ENCODE measurements at regions of chr5 and their contacts with region 1.

Region 1: DNA sequence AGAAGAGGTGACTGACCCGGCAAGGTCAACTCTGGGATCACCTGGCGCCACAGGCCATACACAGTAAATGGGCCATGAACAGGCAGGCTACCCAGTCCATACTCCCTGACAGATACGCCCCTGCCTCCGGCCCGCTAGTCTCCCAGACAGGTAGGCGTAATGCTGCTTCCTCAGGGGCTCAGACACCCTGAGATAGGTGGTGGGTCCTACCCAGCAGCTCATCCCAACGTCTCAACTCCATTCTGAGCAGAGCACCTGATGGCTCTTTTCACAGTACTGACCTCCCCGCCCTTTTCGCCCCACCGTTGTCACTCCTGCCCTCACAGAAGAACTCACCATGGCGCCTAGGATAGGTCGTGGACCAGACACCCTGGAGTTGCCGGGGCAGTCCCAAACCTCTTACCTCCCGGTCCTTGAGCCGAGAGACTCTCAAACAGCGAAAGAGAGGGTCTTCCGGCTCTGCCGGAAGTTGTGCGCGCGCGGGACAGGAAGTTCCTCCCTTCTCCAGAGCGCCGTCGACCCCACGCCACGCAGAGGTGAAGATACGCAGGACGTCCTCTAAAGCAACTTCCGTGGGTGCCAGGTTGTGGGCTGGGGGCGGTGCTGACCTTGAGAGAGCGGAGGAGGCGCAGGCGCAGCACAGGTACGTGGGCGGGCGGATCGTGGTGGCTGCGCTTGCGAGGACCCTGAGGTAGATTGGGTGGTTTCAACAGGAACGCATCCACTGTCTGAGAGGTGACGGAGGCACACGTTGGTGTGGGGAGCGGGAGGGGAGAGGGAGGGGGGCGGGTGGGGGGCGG is at the start of gene TMEM161B:
- DNase-seq: peak; percentile 91 to 99 (median 95)
- ATAC-seq: peak; percentile 96
- H3K4me3 ChIP-seq: peak within 1 kb of the TSS; percentile 76 to 94
- H3K4me3 Mint-ChIP-seq: peak within 1 kb of the TSS; percentile 99
- H3K27ac ChIP-seq: peak within 1 kb of the TSS; percentile 89 to 96
- H3K27ac Mint-ChIP-seq: peak within 1 kb of the TSS; percentile 100
- H3K4me1 ChIP-seq: peaks cover 25% of the 10 kb centered on the region
- H3K4me1 Mint-ChIP-seq: peaks cover 74% of the 10 kb centered on the region
- H3K27me3 ChIP-seq: no peaks in the 10 kb centered on the region
- H3K27me3 Mint-ChIP-seq: no peaks in the 10 kb centered on the region
- CTCF ChIP-seq: no peak
- total RNA-seq, gene TMEM161B: 18.9 to 20.8 TPM

Region 2: DNA sequence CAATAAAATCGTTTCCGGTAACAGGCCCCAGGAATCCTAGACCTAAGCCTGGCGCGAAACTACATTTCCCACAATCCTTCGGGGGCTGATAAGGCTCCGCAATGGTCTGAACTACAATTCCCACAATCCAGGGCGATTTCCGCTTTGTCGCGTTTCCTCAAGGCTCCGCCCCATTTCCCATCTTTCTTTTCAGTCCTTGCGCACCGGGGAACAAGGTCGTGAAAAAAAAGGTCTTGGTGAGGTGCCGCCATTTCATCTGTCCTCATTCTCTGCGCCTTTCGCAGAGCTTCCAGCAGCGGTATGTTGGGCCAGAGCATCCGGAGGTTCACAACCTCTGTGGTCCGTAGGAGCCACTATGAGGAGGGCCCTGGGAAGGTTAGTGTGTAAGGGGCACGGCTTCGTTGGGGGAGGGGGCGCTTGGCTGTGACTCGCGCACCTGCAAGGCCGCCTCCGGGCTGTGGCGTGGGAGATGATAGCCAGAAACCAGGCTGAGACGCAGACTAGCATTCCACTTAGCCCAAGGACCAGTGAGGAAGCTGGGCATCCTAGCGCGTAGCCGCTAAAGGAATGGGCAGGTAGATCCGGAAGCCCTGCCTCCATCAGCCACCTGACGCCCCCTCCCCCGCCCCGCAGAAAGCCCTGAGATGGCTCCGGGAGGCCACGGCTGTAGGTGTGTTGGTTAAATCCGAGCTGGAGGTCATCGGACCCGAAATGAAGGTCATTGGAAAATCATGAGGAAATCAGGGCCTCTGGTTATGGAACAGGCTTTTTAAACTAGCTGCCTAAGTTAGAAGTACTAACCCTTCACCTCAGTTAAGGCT is 1650.6 kb before region 1 on chr5 and contains the start of gene COX7C:
- CTCF ChIA-PET with region 1: no interaction called
- POLR2A ChIA-PET with region 1: no interaction called
- intact Hi-C with region 1: loop called (anchors 1 to 5 kb)
- DNase-seq: peak; percentile 84 to 98 (median 91)
- ATAC-seq: peak; percentile 92
- H3K4me3 ChIP-seq: peak within 1 kb of the TSS; percentile 69 to 97
- H3K4me3 Mint-ChIP-seq: peak within 1 kb of the TSS; percentile 100
- H3K27ac ChIP-seq: peak within 1 kb of the TSS; percentile 89 to 96
- H3K27ac Mint-ChIP-seq: peak within 1 kb of the TSS; percentile 100
- H3K4me1 ChIP-seq: peaks cover 15% of the 10 kb centered on the region
- H3K4me1 Mint-ChIP-seq: peaks cover 28% of the 10 kb centered on the region
- H3K27me3 ChIP-seq: no peaks in the 10 kb centered on the region
- H3K27me3 Mint-ChIP-seq: peaks cover 10% of the 10 kb centered on the region
- CTCF ChIP-seq: no peak
- total RNA-seq, gene COX7C: 432 to 495 TPM

Region 3: GRCh38 chr5:88140856-88141752 is 127.5 kb before region 1 on chr5:
- CTCF ChIA-PET with region 1: no interaction called
- POLR2A ChIA-PET with region 1: no interaction called
- intact Hi-C with region 1: loop called (anchors 5 kb)
- DNase-seq: peak; percentile 62 to 93 (median 80)
- ATAC-seq: peak; percentile 90
- H3K4me3 ChIP-seq: peak overlapping the region; percentile 42 to 53
- H3K4me3 Mint-ChIP-seq: no peak overlapping the region
- H3K27ac ChIP-seq: no peak overlapping the region
- H3K27ac Mint-ChIP-seq: no peak overlapping the region
- H3K4me1 ChIP-seq: peaks cover 39% of the 10 kb centered on the region
- H3K4me1 Mint-ChIP-seq: peaks cover 18% of the 10 kb centered on the region
- H3K27me3 ChIP-seq: peaks cover 19 to 50% of the 10 kb centered on the region in 2 experiments
- H3K27me3 Mint-ChIP-seq: peaks cover 39% of the 10 kb centered on the region
- CTCF ChIP-seq: peak; percentile 46

Region 4: DNA sequence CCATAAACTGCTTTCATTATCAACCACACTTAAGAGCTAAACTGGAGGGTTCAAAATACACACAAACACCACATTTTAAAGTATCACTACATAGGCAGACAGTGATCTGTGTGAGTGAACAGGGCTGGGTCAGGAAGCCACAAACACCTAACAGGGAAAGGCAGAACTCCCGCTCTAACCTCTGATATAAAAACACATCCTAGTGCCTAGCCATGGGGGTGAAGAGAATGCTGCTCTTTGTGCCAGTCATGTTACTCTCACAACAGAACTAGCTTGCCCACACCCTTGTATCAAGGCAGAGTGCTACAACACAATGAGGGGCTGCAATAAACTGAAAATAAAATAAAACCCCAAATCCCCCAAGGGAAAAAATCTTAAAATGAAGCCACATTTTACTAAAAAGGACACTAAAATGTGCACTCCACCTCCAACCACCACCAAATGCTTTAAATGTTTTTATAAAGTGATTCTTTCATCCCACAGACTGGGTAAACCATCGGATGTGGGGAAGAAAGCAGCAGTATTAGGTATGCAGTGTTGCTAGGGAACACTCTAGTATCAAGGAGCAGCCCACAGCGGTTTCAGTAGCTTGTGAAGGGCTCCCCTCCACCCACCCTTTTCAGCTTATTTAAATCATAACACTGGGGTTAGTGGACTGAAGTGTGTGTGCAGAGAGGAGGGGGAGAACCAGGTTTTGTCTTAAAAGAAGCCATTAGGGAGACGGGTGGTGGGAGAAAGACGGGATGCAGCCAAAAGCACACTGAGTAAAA is 64.4 kb before region 1 on chr5:
- CTCF ChIA-PET with region 1: no interaction called
- POLR2A ChIA-PET with region 1: no interaction called
- intact Hi-C with region 1: loop called in 1 of 2 experiments (anchors 2 kb)
- DNase-seq: peak; percentile 12 to 86 (median 54)
- ATAC-seq: peak; percentile 94
- H3K4me3 ChIP-seq: peak overlapping the region in 1 of 2 experiments; percentile 4
- H3K4me3 Mint-ChIP-seq: peak overlapping the region; percentile 60
- H3K27ac ChIP-seq: peak overlapping the region; percentile 26 to 70
- H3K27ac Mint-ChIP-seq: peak overlapping the region; percentile 88
- H3K4me1 ChIP-seq: no peaks in the 10 kb centered on the region
- H3K4me1 Mint-ChIP-seq: peaks cover 14% of the 10 kb centered on the region
- H3K27me3 ChIP-seq: no peaks in the 10 kb centered on the region
- H3K27me3 Mint-ChIP-seq: no peaks in the 10 kb centered on the region
- CTCF ChIP-seq: no peak

Region 5: GRCh38 chr5:88251048-88251711 is 17.4 kb before region 1 on chr5:
- CTCF ChIA-PET with region 1: no interaction called
- POLR2A ChIA-PET with region 1: no interaction called
- intact Hi-C with region 1: loop called in 1 of 2 experiments (anchors 2 kb)
- DNase-seq: peak in 4 of 9 experiments; percentile 27 to 46 (median 34)
- ATAC-seq: peak; percentile 87
- H3K4me3 ChIP-seq: no peak overlapping the region
- H3K4me3 Mint-ChIP-seq: no peak overlapping the region
- H3K27ac ChIP-seq: no peak overlapping the region
- H3K27ac Mint-ChIP-seq: peak overlapping the region; percentile 38
- H3K4me1 ChIP-seq: peaks cover 8% of the 10 kb centered on the region
- H3K4me1 Mint-ChIP-seq: peaks cover 68% of the 10 kb centered on the region
- H3K27me3 ChIP-seq: no peaks in the 10 kb centered on the region
- H3K27me3 Mint-ChIP-seq: no peaks in the 10 kb centered on the region
- CTCF ChIP-seq: no peak